Gastrocnemius medialis (tissue), 4 donors: ENCODE measurements at regions of chr10 and their contacts with region 1.

Region 1: DNA sequence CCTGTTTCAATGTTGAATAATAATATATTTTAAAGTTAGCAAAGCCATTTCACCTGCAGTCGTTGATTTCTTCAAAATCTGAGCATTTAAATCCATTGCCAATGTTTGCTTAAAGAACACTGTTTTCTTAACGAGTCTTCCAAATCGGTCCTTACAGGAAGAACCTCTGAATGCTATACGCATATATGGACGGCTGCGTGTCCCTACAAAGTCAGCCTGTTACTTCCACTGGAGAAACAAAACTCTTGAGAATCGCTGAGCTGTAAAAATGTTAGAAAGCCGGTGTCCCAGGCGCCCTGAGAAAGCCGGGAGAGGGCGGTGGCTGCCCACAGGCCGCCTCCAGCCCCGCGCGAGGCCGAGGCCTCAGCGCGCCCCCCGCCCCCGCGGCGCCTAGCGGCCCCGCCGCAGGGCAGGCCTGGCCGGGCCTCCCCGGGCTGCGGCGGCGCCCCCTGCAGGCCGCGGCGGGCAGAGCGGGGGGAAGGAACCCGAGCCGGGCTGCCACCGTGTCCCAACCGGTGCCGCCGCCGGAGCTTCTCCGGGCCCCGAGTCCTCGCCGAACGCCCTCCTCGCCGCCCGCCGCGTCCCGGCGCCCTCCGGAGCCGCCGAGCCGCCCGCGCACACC is at the start of gene FHIP2A:
- DNase-seq: peak; percentile 40 to 76
- ATAC-seq: peak; percentile 65 to 73
- H3K4me3 ChIP-seq: peak within 1 kb of the TSS; percentile 77 to 89 (median 86)
- H3K27ac ChIP-seq: peak within 1 kb of the TSS; percentile 96 to 98 (median 96)
- H3K4me1 ChIP-seq: peaks cover 23 to 27% of the 10 kb centered on the region in 2 donors
- H3K27me3 ChIP-seq: no peaks in the 10 kb centered on the region
- CTCF ChIP-seq: peak in 4 of 5 experiments; percentile 82 to 91 (median 90)
- POLR2A ChIP-seq: peak; percentile 80 to 82
- total RNA-seq, gene FHIP2A: 22.2 to 35.7 (median 30.1) TPM

Region 2: DNA sequence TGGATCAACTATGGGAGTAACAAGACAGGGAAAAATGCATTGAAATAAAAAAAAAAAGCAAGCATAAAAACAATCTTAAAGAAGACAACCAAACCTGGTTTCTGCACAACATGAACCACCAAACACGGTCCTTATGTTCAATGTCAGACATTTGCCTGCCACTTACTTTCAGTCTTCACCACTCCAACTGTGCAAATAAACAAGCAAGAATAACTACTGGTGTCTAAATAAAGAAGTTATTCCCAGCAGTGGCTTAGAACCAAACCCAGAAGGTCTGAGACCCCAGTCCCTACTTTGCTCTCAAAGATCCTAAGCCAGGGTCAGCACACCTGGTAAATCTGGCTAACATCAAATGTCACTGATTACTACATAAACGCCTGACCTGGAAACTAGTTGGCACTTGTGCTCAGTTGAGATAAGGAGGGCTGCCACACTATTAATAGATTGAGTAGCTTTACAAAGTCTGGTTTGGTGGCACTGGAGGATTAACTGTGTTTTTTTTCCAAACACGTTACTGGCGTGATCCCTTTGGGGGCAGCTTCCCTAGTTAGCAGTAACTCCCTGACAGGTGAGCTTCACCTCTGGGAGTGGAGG is 100.6 kb before region 1 on chr10:
- in situ Hi-C with region 1: no loop called
- intact Hi-C with region 1: loop called (anchors 5 kb)
- DNase-seq: no peak
- ATAC-seq: peak; percentile 56 to 60
- H3K4me3 ChIP-seq: no peak overlapping the region
- H3K27ac ChIP-seq: peak overlapping the region; percentile 35 to 57 (median 42)
- H3K4me1 ChIP-seq: peaks cover 18 to 25% of the 10 kb centered on the region in 2 donors
- H3K27me3 ChIP-seq: no peaks in the 10 kb centered on the region
- CTCF ChIP-seq: no peak
- POLR2A ChIP-seq: no peak

Region 3: DNA sequence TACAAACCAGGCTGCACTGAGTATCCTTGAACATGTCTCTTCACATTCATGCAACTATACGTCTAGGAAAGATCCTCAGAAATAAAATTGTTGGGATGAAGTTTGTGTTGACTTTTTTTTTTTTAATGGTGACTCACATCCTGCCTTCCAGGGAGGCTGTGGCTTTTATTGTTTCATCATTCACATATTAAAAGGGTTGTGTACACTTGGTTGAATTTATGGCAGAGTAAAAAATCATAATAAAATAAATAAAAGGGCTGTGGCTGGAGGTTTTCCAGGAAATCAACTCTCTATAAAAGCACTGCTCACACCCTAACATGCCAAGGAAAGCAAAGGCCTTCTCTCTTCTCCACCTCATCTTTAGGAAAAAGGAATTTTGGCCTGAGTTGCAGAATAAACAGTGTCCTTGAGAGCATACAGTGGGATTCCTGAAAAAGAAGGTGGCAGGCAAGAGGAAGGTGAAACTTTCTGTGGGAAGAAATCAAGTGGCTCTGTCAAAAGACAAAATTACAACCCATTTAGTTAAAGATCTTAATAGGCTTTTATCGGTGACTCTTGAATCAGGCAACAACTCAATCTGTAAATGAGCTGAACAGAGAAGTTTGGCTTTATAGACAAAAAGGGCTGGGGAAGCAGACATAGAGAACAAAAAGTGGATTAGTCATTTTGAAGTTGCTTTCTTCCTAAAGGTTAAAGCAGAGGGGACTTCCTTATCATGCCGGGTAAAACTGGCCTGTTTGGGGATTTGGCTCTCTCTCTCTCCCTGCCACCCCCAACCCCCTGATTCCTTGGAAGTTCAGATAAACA is 41.4 kb before region 1 on chr10:
- in situ Hi-C with region 1: no loop called
- intact Hi-C with region 1: loop called (anchors 2 kb)
- DNase-seq: no peak
- ATAC-seq: peak in 1 of 2 donors; percentile 33
- H3K4me3 ChIP-seq: no peak overlapping the region
- H3K27ac ChIP-seq: peak overlapping the region in 3 of 4 donors; percentile 24 to 46 (median 39)
- H3K4me1 ChIP-seq: no peaks in the 10 kb centered on the region
- H3K27me3 ChIP-seq: no peaks in the 10 kb centered on the region
- CTCF ChIP-seq: no peak
- POLR2A ChIP-seq: peak in 1 of 2 donors; percentile 19

Region 4: DNA sequence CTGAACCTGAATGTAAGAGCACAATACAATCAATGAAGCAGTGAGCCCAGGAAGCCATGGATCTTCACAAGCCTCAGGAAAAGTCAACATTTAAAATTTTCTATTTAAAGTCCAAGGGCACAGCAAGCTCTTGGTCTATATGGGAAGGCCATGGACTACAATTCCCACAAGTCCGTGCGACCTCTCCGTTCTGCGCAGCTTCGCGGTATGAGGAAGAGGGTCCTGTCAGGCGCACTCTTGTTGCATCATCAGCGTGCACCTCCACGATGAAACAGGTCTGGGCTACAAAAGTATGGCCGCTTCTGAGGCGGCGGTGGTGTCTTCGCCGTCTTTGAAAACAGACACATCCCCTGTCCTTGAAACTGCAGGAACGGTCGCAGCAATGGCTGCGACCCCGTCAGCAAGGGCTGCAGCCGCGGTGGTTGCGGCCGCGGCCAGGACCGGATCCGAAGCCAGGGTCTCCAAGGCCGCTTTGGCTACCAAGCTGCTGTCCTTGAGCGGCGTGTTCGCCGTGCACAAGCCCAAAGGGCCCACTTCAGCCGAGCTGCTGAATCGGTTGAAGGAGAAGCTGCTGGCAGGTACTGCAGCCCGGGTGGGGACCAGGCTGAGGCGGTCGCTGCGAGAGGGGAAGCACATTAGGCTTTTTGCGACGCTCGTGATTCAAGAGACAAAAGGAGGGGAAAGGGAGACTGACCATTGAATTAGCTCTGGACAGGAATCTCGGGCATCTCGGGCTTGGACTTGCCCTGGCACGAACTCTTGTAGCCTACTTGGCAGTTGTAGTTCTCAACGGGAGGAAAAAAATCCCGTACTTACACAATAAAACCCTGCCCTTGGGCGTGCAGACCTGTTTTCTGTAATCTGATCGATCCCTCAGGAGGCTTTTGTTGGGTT is 116.8 kb after region 1 on chr10 and contains the start of gene TRUB1:
- in situ Hi-C with region 1: no loop called
- intact Hi-C with region 1: loop called (anchors 10 kb)
- DNase-seq: peak; percentile 93 to 94
- ATAC-seq: peak; percentile 96 to 99
- H3K4me3 ChIP-seq: peak within 1 kb of the TSS; percentile 79 to 91 (median 84)
- H3K27ac ChIP-seq: peak within 1 kb of the TSS; percentile 82 to 94 (median 88)
- H3K4me1 ChIP-seq: peaks cover 23 to 39% of the 10 kb centered on the region in 2 donors
- H3K27me3 ChIP-seq: no peaks in the 10 kb centered on the region
- CTCF ChIP-seq: no peak
- POLR2A ChIP-seq: peak; percentile 43 to 48
- total RNA-seq, gene TRUB1: 8.5 to 16.5 (median 10.3) TPM

Region 5: DNA sequence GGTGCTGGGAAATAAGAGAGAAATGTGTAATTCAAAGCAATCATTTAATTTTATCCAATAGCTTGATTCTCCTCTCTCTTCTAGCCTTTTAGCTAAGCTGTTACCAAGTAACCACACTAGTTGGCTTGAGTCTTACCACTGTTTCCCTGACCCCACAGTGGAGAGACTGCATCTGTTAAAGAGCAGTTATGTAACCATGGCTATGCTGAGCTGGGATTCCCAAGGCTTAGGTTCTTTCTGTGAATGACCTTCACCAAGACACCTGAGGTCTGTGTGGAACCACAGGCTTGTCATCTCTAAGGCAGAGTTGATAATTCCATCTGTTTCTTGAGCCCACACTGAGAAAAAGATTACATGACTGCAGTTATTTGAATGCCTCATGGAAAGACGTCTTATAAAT is 224.1 kb after region 1 on chr10:
- in situ Hi-C with region 1: no loop called
- intact Hi-C with region 1: no loop called
- DNase-seq: no peak
- ATAC-seq: no peak
- H3K4me3 ChIP-seq: no peak overlapping the region
- H3K27ac ChIP-seq: peak overlapping the region in 2 of 4 donors; percentile 57 to 63
- H3K4me1 ChIP-seq: peaks cover 0 to 5% of the 10 kb centered on the region in 2 donors
- H3K27me3 ChIP-seq: no peaks in the 10 kb centered on the region
- CTCF ChIP-seq: no peak
- POLR2A ChIP-seq: no peak